Dendritic cell treated with granulocyte-macrophage colony-stimulating factor and Interleukin-4, amounts not matched to agents 40 ng/mL and 50 ng/mL, for 4 days (primary cell): ENCODE measurements at regions of chr14 and their contacts with region 1.

Region 1: DNA sequence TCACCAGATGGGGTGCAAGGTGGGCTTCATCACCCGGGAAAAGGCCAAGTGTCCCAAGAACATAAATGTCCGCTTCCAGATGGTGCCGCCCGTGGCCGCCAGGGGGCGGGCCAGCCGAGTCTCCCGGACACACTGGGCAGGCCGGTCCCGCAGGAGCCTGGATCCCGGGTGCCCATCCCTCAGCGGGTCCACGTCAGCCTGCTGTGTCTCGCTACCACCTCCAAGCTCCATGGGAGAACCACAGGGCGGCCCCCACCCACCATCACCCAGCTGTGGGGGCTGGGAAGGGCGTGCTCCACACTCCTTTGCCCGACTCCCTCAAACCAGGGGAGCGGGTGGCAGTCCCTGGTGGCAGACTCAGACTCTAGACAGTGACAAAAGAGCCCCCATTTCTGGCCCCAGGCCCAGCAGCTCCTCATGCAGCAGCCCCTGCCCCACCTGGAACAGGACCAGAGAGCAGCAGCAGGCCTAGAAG is 22.0 kb upstream of the NUDT14 start:
- H3K4me3 Mint-ChIP-seq: no peak overlapping the region
- H3K27ac Mint-ChIP-seq: no peak overlapping the region
- H3K4me1 Mint-ChIP-seq: peaks cover 57% of the 10 kb centered on the region
- H3K27me3 Mint-ChIP-seq: peaks cover 76% of the 10 kb centered on the region

Region 2: DNA sequence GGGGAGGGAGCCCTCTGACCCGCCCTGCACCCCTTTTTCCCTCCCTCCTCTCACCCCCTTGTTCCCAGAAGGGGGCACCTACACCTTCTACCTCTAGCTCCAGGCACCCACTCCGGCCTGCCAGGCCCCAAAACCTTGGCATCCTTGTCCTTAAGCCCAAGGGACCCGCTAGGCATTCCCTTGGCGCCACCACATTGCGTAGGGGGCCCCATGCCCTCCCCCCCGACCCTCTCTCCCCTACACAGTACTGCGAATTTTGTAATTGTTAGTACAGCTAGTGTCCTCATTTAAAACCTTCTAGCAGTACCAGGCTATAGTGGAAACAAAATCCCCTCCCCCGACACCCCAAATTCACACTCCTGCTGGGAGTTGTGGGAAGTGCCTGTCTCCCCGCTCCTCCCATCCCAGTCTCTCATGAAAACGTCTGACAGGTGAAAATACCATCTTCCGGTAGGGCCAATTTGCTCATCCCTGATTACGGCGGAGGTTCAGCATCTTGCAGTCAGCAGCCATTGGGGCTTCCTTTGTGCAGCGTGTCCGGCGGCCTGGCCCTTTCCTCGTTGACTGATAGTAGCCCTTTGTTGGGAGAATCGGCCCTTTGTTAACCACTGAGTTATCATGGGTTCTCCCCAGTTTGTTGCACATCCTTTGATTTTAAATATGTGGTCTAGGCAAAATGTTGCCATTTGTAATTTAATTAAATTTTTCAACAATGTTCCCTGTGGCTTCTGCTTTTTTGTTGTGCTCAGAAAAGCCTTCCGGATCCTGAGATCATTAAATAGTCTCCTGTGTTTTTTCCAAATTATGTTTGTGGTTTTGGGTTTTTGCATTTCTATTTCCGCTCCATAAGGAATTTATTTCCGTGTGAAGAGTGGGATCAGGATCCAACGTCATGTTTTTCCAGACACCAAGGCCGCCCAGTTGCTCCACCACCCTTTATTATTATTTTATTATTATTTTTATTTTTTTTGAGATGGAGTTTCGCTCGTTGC is 345.9 kb before region 1 on chr14:
- intact Hi-C with region 1: no loop called
- H3K4me3 Mint-ChIP-seq: no peak overlapping the region
- H3K27ac Mint-ChIP-seq: no peak overlapping the region
- H3K4me1 Mint-ChIP-seq: no peaks in the 10 kb centered on the region
- H3K27me3 Mint-ChIP-seq: peaks cover 19% of the 10 kb centered on the region

Region 3: GRCh38 chr14:105351920-105352851 is 149.1 kb after region 1 on chr14:
- intact Hi-C with region 1: loop called (anchors 1 kb)
- H3K4me3 Mint-ChIP-seq: no peak overlapping the region
- H3K27ac Mint-ChIP-seq: no peak overlapping the region
- H3K4me1 Mint-ChIP-seq: peaks cover 5% of the 10 kb centered on the region
- H3K27me3 Mint-ChIP-seq: no peaks in the 10 kb centered on the region